Activated CD8-positive, alpha-beta memory T cell treated with anti-CD3 and anti-CD28 coated beads, Interleukin-2, amount 10 ng/mL, durations not matched to agents 7 days and 5 days (primary cell): ENCODE measurements at regions of chr1 and their contacts with region 1.

Region 1: DNA sequence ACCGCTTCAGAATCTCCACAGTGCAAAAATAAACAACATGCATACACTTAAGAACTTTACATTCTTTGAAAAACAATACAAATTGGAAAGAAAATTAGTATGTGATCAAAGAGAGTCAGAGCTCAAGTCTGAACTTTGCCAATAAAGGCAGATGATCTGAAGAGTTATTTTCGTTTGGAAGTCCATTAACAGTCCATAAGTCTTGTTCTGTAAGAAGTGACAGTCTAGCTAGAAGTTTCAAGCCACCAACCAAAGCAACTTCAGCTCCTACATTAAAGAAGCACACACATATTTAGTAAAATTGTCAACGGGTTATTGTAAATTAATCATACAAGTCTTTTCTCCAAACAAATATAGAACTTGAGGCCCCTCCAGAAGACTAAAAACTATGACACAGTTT is 20.7 kb downstream of the ANGEL2 start:
- DNase-seq: no peak
- ATAC-seq: no peak
- H3K4me3 Mint-ChIP-seq: no peak overlapping the region
- H3K27ac Mint-ChIP-seq: no peak overlapping the region
- H3K4me1 Mint-ChIP-seq: peaks cover 4% of the 10 kb centered on the region
- H3K27me3 Mint-ChIP-seq: no peaks in the 10 kb centered on the region

Region 2: GRCh38 chr1:212791676-212792395 is 203.1 kb before region 1 on chr1 and contains the starts of genes NSL1 and TATDN3:
- CTCF ChIA-PET with region 1: interaction called, 10 read pairs
- DNase-seq: peak; percentile 94
- ATAC-seq: peak; percentile 91
- H3K4me3 Mint-ChIP-seq: peak within 1 kb of the TSS; percentile 92
- H3K27ac Mint-ChIP-seq: peak within 1 kb of the TSS; percentile 95
- H3K4me1 Mint-ChIP-seq: peaks cover 41% of the 10 kb centered on the region
- H3K27me3 Mint-ChIP-seq: no peaks in the 10 kb centered on the region
- total RNA-seq, gene NSL1: 39.7 to 48.5 TPM
- total RNA-seq, gene TATDN3: 13.7 to 22.1 TPM